ENCODE measurements at regions of chr4 and their contacts with region 1.

Region 1: DNA sequence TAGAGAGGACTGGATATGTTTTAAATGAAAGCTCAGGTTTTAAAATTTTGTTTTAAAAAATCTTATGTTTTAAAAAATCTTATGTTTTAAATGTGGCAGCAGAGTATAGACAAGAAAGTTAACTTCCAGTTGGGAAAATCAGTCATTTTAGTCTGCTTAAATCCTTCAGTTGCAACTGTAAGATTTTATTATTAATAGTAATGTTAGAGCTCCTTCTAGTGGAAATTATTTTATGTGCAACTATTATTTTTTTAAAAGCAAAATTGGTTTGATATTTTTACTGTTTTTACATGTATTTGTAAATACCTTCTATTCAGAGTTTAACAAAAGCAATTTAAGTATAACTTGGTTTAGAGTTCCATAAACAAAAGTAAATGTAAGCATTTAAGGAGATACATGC is 8.5 kb upstream of the NUDT6 start:
- DNase-seq: no peak
- ATAC-seq: no peak
- H3K4me3 Mint-ChIP-seq: no peak overlapping the region
- H3K27ac Mint-ChIP-seq: no peak overlapping the region
- H3K4me1 Mint-ChIP-seq: peaks cover 6% of the 10 kb centered on the region
- H3K27me3 Mint-ChIP-seq: no peaks in the 10 kb centered on the region
- CTCF ChIP-seq: peak; percentile 70

Region 2: DNA sequence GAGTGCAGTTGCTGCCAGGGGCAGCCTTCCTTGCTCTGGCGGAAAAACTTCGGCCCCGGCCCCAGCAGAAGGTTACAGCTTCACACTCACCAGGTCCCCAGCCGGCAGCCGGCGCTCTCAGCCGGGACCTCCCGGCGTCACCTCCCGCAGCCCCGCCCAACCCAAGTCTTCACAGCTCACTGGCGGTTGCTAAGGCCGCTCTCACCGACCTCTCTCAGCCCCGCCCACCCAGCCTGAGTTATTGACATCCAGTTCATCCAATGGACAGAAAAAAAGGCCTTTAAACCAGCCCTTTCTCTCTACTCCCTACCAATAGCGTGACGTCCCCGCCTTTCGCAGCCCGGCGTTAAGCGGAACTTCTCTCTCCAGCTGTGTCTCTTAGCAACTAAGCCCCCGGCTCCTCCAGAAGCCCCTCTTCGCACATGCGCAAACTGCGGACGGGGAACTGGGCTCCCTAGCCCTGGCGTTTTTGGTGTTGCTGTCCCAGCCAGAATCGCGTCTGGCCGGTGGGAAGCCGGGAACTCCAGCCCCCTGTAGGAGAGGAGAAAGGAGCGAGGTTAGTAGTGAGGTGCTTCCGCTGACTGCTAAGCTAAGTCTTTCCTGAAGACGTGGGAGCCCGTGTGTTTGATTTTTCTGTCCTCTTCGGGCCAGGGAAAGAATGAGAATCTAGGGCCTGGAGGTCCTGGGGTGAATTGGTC is 198.4 kb before region 1 on chr4 and contains the start of gene BBS12:
- CTCF ChIA-PET with region 1: interaction called, 17 read pairs
- POLR2A ChIA-PET with region 1: no interaction called
- intact Hi-C with region 1: no loop called
- DNase-seq: peak; percentile 99
- ATAC-seq: peak; percentile 99
- H3K4me3 Mint-ChIP-seq: peak within 1 kb of the TSS; percentile 94
- H3K27ac Mint-ChIP-seq: peak within 1 kb of the TSS; percentile 91
- H3K4me1 Mint-ChIP-seq: peaks cover 11% of the 10 kb centered on the region
- H3K27me3 Mint-ChIP-seq: no peaks in the 10 kb centered on the region
- CTCF ChIP-seq: no peak
- total RNA-seq, gene BBS12: 0.74 to 0.89 TPM

Region 3: GRCh38 chr4:122946142-122946541 is 15.3 kb after region 1 on chr4:
- CTCF ChIA-PET with region 1: no interaction called
- POLR2A ChIA-PET with region 1: no interaction called
- intact Hi-C with region 1: no loop called
- DNase-seq: no peak
- ATAC-seq: no peak
- H3K4me3 Mint-ChIP-seq: no peak overlapping the region
- H3K27ac Mint-ChIP-seq: no peak overlapping the region
- H3K4me1 Mint-ChIP-seq: no peaks in the 10 kb centered on the region
- H3K27me3 Mint-ChIP-seq: no peaks in the 10 kb centered on the region
- CTCF ChIP-seq: no peak